ENCODE measurements at regions of chr6 and their contacts with region 1.

Region 1: GRCh38 chr6:90179190-90180169 is 117.2 kb downstream of the BACH2 start:
- DNase-seq: no peak
- ATAC-seq: no peak
- H3K4me3 Mint-ChIP-seq: peak overlapping the region; percentile 77
- H3K27ac Mint-ChIP-seq: peak overlapping the region; percentile 92
- H3K4me1 Mint-ChIP-seq: peaks cover 79% of the 10 kb centered on the region
- H3K27me3 Mint-ChIP-seq: no peaks in the 10 kb centered on the region
- CTCF ChIP-seq: no peak

Region 2: GRCh38 chr6:89940225-89941027 is 239.1 kb before region 1 on chr6:
- CTCF ChIA-PET with region 1: interaction called, 12 read pairs
- POLR2A ChIA-PET with region 1: interaction called, 4 read pairs
- intact Hi-C with region 1: loop called (anchors 1 kb)
- DNase-seq: no peak
- ATAC-seq: peak; percentile 89
- H3K4me3 Mint-ChIP-seq: no peak overlapping the region
- H3K27ac Mint-ChIP-seq: peak overlapping the region; percentile 59
- H3K4me1 Mint-ChIP-seq: peaks cover 13% of the 10 kb centered on the region
- H3K27me3 Mint-ChIP-seq: no peaks in the 10 kb centered on the region
- CTCF ChIP-seq: peak; percentile 58

Region 3: DNA sequence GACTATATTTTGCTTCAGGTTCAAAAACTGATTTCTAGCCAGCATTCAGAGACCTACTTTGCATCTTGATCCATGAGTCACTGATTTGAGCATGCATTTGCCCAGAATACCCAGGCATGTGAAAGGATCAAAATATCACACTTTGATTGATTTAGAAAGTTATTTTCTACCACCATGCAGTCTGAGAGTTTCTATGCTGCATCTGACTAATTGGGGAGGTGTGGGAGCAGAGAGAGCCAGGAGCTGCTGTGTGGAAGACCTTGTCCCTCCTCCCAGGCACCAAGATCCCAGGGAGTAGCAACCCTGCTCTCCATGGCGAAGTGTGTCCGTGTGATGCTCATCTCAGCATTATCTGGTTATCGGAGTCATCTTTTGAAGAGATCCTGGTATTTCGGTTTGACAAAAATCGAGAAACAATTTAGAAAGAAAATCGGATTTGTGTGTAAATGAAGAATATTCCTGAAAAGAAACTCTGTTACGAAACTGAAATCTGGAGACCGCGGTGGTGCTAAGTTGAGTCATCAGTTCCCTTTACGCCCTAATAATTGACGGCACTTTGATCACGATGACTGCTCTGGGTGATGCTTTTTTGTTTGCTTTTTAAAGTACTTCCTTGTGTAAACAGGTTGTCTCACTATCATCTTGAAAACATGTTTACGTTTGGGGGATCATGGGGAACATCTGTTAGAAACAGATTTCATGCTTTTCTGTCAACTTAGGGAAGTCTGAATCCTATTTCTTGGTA is 76.3 kb before region 1 on chr6:
- CTCF ChIA-PET with region 1: interaction called, 5 read pairs
- POLR2A ChIA-PET with region 1: interaction called, 5 read pairs
- intact Hi-C with region 1: loop called (anchors 1 kb)
- DNase-seq: no peak
- ATAC-seq: peak; percentile 47
- H3K4me3 Mint-ChIP-seq: peak overlapping the region; percentile 78
- H3K27ac Mint-ChIP-seq: peak overlapping the region; percentile 74
- H3K4me1 Mint-ChIP-seq: peaks cover 97% of the 10 kb centered on the region
- H3K27me3 Mint-ChIP-seq: no peaks in the 10 kb centered on the region
- CTCF ChIP-seq: no peak

Region 4: DNA sequence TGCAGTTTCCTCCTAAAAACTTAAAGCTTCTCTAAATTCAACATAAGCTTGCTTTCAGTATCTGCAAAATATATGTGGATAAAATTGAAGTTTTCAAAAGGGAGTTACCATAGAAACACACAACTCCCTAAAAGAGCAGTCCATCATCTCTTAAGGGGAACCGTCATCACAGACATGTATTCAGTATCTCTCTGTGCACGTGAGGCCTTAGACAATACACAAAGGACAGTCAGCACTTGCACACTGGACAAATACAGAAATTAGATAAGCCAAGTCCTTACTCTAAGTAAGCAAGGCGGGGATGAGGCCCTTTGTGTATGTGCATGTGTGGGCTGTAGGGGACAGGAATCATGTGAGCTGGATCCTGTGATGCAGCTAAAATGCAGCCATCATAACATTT is 19.5 kb before region 1 on chr6:
- CTCF ChIA-PET with region 1: no interaction called
- POLR2A ChIA-PET with region 1: interaction called, 6 read pairs
- intact Hi-C with region 1: loop called (anchors 2 kb)
- DNase-seq: no peak
- ATAC-seq: peak; percentile 34
- H3K4me3 Mint-ChIP-seq: peak overlapping the region; percentile 13
- H3K27ac Mint-ChIP-seq: peak overlapping the region; percentile 64
- H3K4me1 Mint-ChIP-seq: peaks cover 78% of the 10 kb centered on the region
- H3K27me3 Mint-ChIP-seq: no peaks in the 10 kb centered on the region
- CTCF ChIP-seq: no peak

Region 5: DNA sequence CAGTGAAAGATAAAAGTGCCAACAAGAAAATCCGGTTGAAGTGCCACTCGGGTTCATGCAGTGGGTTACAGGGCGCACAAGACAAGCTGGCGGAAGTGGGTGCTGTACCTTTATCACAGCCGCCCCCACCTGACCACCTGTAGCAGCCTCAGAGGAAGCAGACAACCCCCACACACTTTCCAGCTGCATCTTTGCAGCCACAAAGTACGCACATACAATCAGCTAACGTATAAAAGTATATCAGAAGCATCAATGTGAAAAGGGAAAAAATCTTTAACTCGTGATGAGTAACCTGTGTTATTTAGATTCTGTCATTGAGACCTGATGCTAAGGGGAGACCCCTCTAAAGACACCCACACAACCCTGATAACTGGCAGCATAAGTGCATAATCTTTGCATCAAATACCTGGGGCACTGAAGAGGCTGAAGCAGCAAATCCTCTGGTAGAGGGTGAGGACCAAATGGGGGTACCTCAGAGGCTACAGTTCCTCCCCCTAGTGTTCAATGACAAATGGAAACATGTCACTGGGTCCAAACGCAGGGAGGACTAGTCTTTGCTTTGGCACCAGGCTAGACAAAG is 95.1 kb after region 1 on chr6:
- CTCF ChIA-PET with region 1: interaction called, 3 read pairs
- POLR2A ChIA-PET with region 1: interaction called, 14 read pairs
- intact Hi-C with region 1: no loop called
- DNase-seq: peak; percentile 43
- ATAC-seq: peak; percentile 84
- H3K4me3 Mint-ChIP-seq: peak overlapping the region; percentile 64
- H3K27ac Mint-ChIP-seq: peak overlapping the region; percentile 85
- H3K4me1 Mint-ChIP-seq: peaks cover 93% of the 10 kb centered on the region
- H3K27me3 Mint-ChIP-seq: no peaks in the 10 kb centered on the region
- CTCF ChIP-seq: no peak